Sigmoid colon (tissue), 7 donors: ENCODE measurements at regions of chr15 and their contacts with region 1.

Region 1: DNA sequence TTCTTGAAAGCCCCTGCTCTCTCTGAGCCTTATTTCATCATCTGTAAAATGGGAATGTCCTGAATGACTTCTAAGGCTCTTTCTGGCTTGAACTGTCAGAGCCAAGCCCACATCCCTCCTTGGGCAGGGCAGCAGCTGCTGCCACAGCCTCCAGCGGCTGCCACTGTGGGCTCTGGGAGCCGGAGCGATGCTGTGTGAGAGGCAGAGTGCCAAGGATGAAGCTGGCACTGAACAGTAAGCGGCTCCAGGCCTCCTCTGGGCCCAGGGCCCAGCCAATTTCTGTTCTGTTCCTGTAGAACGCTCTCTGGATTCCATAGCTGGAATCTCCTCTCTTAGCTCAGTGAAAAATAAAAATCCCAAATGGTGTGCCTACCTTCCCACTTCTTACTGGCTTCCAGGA is 4.4 kb downstream of the CPLX3 start:
- DNase-seq: peak; percentile 82
- H3K4me3 ChIP-seq: no peak overlapping the region
- H3K27ac ChIP-seq: peak overlapping the region; percentile 24 to 62 (median 46)
- H3K4me1 ChIP-seq: peaks cover 0 to 11% (median 9%) of the 10 kb centered on the region in 4 donors
- H3K27me3 ChIP-seq: peaks cover 0 to 28% (median 22%) of the 10 kb centered on the region in 3 donors
- CTCF ChIP-seq: no peak
- EP300 ChIP-seq: no peak
- POLR2A ChIP-seq: no peak

Region 2: GRCh38 chr15:74816808-74817674 is 13.8 kb before region 1 on chr15:
- intact Hi-C with region 1: loop called (anchors 2 kb)
- DNase-seq: no peak
- H3K4me3 ChIP-seq: no peak overlapping the region
- H3K27ac ChIP-seq: peak overlapping the region in 3 of 4 donors; percentile 35 to 61 (median 59)
- H3K4me1 ChIP-seq: peaks cover 0 to 29% (median 19%) of the 10 kb centered on the region in 4 donors
- H3K27me3 ChIP-seq: no peaks in the 10 kb centered on the region
- CTCF ChIP-seq: peak in 1 of 4 experiments; percentile 20
- EP300 ChIP-seq: no peak
- POLR2A ChIP-seq: no peak